Activated CD4-positive, alpha-beta memory T cell treated with anti-CD3 and anti-CD28 coated beads, Interleukin-2, amount 10 ng/mL, durations not matched to agents 7 days and 5 days (primary cell): ENCODE measurements at regions of chr6 and their contacts with region 1.

Region 1: GRCh38 chr6:169751242-169752073 is at the starts of genes DYNLT2 and ERMARD:
- DNase-seq: peak; percentile 95
- H3K4me3 Mint-ChIP-seq: peak within 1 kb of the TSS; percentile 98
- H3K27ac Mint-ChIP-seq: peak within 1 kb of the TSS; percentile 95
- H3K4me1 Mint-ChIP-seq: peaks cover 32% of the 10 kb centered on the region
- H3K27me3 Mint-ChIP-seq: no peaks in the 10 kb centered on the region
- total RNA-seq, gene DYNLT2: 1.7 to 2.2 TPM
- total RNA-seq, gene ERMARD: 29.3 to 30.7 TPM

Region 2: DNA sequence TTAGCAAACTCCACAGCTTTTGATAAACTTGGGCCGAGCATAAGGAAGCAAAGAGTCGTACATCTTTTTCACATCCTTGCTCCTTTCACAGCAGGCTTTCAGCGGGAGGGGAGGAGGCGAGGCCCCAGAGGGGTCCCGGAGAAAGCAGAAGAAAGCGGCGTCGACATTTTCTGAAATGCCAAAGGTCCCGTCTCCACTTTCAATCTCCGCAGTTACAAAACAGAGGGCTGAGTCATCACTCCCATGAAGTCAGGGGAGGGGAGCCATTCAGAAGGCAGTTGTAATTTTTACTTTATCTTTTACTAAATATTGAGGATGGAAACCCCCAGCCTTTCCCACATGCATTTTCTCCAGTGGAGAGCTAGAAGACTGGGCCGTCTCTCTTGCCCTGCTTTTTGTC is 323.6 kb before region 1 on chr6:
- CTCF ChIA-PET with region 1: no interaction called
- POLR2A ChIA-PET with region 1: no interaction called
- DNase-seq: no peak
- H3K4me3 Mint-ChIP-seq: no peak overlapping the region
- H3K27ac Mint-ChIP-seq: no peak overlapping the region
- H3K4me1 Mint-ChIP-seq: no peaks in the 10 kb centered on the region
- H3K27me3 Mint-ChIP-seq: no peaks in the 10 kb centered on the region

Region 3: DNA sequence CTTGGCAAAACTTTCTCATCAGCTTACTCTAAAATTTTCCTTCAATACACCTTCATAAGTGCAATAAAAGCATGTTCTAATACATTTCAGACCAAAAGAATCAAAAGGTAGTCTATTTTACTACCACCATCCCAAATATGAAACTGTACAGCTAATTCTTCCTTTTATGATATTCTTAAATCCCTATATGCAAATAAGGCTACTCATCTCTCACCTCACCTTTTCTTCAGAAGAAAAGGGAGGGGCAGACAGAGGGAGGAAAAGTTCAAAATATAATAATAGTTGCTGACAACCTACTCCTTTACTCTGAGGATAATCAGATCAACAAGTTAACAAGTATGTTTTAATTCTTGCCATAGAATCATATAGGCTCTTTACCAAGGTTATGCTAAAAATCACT is 42.2 kb before region 1 on chr6:
- CTCF ChIA-PET with region 1: interaction called, 3 read pairs
- POLR2A ChIA-PET with region 1: interaction called, 14 read pairs
- DNase-seq: no peak
- H3K4me3 Mint-ChIP-seq: no peak overlapping the region
- H3K27ac Mint-ChIP-seq: no peak overlapping the region
- H3K4me1 Mint-ChIP-seq: peaks cover 23% of the 10 kb centered on the region
- H3K27me3 Mint-ChIP-seq: no peaks in the 10 kb centered on the region

Region 4: GRCh38 chr6:169741344-169741743 is 10.1 kb before region 1 on chr6:
- CTCF ChIA-PET with region 1: no interaction called
- POLR2A ChIA-PET with region 1: interaction called, 16 read pairs
- DNase-seq: no peak
- H3K4me3 Mint-ChIP-seq: no peak overlapping the region
- H3K27ac Mint-ChIP-seq: no peak overlapping the region
- H3K4me1 Mint-ChIP-seq: no peaks in the 10 kb centered on the region
- H3K27me3 Mint-ChIP-seq: peaks cover 13% of the 10 kb centered on the region

Region 5: GRCh38 chr6:169789982-169790927 is 38.8 kb after region 1 on chr6:
- CTCF ChIA-PET with region 1: interaction called, 10 read pairs
- POLR2A ChIA-PET with region 1: interaction called, 5 read pairs
- DNase-seq: peak; percentile 79
- H3K4me3 Mint-ChIP-seq: peak overlapping the region; percentile 75
- H3K27ac Mint-ChIP-seq: no peak overlapping the region
- H3K4me1 Mint-ChIP-seq: peaks cover 22% of the 10 kb centered on the region
- H3K27me3 Mint-ChIP-seq: peaks cover 27% of the 10 kb centered on the region

Region 6: DNA sequence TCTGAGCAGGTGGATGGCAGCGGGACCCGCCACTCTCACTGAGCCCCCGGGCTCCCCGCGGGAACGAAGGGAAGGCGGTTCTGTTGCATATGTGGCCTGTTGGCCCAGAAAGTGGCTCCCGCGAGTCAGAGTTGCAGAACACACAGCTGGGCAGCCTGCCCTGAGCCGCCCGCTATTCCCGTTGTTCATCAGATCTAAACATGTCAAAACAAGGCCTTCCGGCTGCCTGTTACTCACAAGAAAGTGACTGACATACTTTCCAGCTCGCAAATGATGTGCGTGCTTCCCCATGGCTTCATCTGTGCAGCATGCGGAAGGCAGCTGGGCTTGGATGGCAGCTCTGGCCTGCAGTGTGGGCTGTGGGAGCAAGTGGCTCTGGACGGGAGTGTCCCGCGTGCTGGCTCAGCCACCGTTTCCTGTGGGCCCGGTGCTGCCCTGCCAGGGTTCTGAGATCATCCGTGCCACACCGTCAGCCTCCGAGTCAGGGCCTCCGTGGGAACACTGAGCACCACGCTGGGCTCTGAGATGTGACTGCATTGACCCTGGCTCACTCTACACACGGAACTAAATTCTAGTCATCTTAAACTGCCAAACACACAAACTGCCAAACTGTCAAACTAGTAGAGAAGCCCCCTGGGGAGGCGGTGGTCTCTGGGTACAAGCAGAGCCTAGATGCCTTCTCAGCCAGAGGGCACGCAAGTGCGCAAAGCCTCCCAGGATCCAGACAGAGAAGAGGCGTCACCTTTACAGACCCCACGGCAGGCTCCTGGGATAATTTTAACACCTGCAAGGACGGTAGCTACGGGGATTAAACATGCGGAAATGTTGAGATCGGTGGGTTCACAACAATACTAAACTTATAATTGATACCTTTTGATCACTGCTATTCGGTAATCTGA is 227.4 kb after region 1 on chr6:
- CTCF ChIA-PET with region 1: no interaction called
- POLR2A ChIA-PET with region 1: no interaction called
- DNase-seq: no peak
- H3K4me3 Mint-ChIP-seq: no peak overlapping the region
- H3K27ac Mint-ChIP-seq: no peak overlapping the region
- H3K4me1 Mint-ChIP-seq: no peaks in the 10 kb centered on the region
- H3K27me3 Mint-ChIP-seq: no peaks in the 10 kb centered on the region

Region 7: DNA sequence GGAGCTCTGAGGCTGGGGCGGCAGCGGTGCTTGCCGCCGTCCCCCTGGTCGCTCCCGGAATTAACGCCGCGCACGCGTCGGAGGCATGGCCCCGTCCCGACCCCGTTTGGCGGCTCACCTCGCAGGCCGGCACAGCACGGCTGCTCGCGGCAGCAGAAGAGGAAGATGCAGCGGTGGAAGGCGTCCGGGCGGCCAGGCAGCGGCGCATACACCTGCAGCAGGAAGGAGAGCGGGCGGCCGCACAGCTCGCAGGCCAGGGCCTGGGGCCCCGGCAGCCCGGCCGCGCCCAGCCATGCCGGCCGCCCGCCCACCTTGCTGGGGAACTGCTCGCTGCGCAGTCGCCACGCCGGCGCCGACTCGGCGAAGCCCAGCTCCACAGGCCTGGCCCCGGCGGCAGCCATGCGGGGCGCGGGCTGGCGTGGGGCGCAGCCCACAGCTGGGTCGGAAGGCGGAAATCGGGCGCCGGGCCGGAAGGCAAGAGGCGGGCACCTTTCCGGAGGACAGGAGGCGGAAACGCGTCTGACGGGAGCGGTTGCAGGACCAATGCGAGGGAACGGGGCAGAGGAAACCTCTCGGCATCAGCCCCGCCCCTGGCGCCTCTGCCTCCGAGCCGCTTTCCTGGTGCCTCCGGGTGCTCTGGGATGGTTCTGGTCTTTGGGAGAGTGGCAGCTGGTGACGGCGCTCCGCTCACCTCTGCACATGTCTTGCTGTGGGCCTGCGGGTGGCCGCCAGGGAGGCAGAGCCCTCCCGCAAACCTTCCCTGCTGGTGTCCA is 832.9 kb after region 1 on chr6 and contains the start of gene PDCD2:
- CTCF ChIA-PET with region 1: no interaction called
- POLR2A ChIA-PET with region 1: interaction called, 14 read pairs
- DNase-seq: peak; percentile 94
- H3K4me3 Mint-ChIP-seq: peak within 1 kb of the TSS; percentile 98
- H3K27ac Mint-ChIP-seq: peak within 1 kb of the TSS; percentile 91
- H3K4me1 Mint-ChIP-seq: peaks cover 34% of the 10 kb centered on the region
- H3K27me3 Mint-ChIP-seq: peaks cover 3% of the 10 kb centered on the region
- total RNA-seq, gene PDCD2: 78.7 to 82.1 TPM